AG04450 (cell line): ENCODE measurements at regions of chr7 and their contacts with region 1.

Region 1: DNA sequence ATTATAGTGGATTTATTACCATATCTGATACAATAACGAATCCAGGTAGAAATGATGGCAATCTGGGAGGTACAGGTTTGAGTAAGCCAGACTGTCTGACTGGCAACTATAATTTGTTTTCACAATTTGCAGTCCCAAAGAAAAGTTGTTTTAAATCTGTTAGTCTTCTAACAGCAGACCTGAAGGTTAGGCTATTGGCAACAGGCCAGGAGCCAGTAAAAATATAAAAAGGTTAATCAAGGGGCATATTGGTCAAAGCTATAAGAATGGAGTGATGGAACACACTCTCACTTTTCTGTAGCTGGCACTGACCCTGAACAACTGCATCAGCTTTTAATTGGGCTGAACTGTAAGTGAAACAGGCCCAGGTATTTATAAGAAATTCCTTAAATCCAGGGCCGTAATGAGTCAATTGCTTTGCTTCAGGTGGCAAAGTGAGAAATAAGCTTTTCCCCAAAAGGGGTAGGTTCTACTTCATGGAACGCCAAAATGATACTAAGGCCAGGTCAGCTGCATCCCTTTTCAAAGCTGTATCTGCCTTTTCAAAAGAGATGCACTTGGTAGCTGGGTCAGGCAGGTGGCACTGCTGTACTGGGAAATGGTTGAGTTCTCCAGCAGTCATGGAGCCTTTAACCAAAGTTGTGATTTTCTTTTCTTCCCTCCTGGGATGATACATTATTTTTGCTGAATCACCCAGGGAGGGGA is 7.0 kb upstream of the GPR22 start:
- DNase-seq: peak; percentile 50
- H3K4me3 ChIP-seq: no peak overlapping the region
- H3K27ac ChIP-seq: no peak overlapping the region
- H3K27me3 ChIP-seq: no peaks in the 10 kb centered on the region
- CTCF ChIP-seq: peak; percentile 91

Region 2: GRCh38 chr7:107479321-107479720 is 16.4 kb after region 1 on chr7:
- CTCF ChIA-PET with region 1: interaction called, 19 read pairs
- POLR2A ChIA-PET with region 1: no interaction called
- DNase-seq: no peak
- H3K4me3 ChIP-seq: no peak overlapping the region
- H3K27ac ChIP-seq: no peak overlapping the region
- H3K27me3 ChIP-seq: no peaks in the 10 kb centered on the region
- CTCF ChIP-seq: no peak

Region 3: GRCh38 chr7:107501593-107501992 is 38.7 kb after region 1 on chr7:
- CTCF ChIA-PET with region 1: interaction called, 11 read pairs
- POLR2A ChIA-PET with region 1: no interaction called
- DNase-seq: no peak
- H3K4me3 ChIP-seq: no peak overlapping the region
- H3K27ac ChIP-seq: no peak overlapping the region
- H3K27me3 ChIP-seq: no peaks in the 10 kb centered on the region
- CTCF ChIP-seq: peak; percentile 45

Region 4: DNA sequence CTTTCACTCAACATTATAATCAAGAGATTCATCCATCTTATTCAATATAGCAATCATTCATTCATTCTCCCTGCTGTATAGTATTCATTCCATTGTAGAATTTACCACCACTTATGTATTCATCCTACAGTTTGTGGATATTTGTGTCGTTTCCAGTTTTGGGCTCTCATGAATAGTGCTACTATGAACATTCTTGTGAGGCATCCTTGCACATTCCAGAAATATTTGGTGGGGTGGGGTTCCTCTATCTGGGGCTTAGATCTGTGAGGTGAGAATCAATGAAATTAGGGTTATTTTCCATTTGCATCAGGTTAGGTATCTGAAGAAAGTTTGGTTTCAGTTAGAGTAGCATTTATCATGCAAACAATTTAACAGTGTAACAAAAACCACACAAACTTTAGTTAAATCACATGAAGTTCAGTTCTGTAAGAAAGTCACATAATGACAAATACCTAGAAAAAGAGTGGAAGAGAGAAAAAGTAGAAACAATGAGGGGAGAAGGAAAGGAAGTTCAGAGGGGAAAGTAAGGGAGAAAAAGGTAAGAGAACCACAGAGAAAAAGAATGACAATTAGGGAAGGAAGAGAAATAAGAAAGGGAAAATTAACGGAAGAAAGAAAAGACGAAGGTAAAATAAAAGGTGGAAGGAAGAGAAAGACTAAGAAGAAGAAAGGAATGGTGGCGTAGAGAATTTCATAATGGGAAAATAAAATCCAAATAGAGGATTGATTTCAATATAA is 255.7 kb after region 1 on chr7:
- CTCF ChIA-PET with region 1: interaction called, 19 read pairs
- POLR2A ChIA-PET with region 1: no interaction called
- DNase-seq: no peak
- H3K4me3 ChIP-seq: no peak overlapping the region
- H3K27ac ChIP-seq: no peak overlapping the region
- H3K27me3 ChIP-seq: no peaks in the 10 kb centered on the region
- CTCF ChIP-seq: no peak

Region 5: GRCh38 chr7:107725151-107725740 is 262.4 kb after region 1 on chr7:
- CTCF ChIA-PET with region 1: interaction called, 75 read pairs
- POLR2A ChIA-PET with region 1: no interaction called
- DNase-seq: peak; percentile 42
- H3K4me3 ChIP-seq: no peak overlapping the region
- H3K27ac ChIP-seq: no peak overlapping the region
- H3K27me3 ChIP-seq: peaks cover 2% of the 10 kb centered on the region
- CTCF ChIP-seq: peak; percentile 65

Region 6: DNA sequence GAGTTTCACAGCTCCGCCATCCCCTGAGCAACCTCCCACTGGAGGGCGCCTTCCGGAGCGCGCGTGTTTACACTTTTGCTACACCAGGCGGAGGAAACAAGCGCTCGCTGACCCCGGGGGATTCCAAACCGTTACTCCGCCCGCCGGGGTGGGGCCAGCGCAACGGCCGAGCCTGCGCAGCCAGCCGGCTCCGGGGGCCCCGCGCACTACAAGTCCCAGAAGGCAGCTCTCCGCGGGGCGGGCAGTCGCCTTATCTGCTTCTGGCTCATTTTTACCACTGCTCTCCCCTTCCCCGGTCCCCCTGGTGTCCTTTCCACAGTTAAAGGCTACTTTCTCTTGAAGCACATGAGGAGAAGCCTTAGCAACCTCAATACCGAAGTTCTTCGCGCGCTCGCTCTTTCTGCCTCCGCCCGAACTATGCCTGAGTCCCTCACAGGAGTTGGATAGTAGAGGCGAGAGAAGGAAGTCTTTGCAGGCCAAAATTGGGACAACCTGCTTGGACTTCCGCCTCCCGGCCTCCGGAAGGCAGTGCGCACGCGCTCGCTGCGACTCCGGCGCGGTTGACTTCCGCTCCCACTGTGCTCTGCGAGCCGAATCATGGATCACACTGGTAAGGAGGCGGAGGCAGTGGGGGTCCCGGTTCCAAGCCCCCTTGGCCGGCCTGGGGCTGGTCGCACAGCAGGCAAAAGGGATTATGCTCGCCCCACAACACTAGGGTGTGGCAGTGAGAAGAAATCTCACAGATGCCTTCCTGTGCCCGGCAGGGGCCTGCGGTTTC is 280.9 kb after region 1 on chr7 and contains the start of gene CBLL1:
- CTCF ChIA-PET with region 1: interaction called, 48 read pairs
- POLR2A ChIA-PET with region 1: interaction called, 3 read pairs
- DNase-seq: peak; percentile 87
- H3K4me3 ChIP-seq: peak within 1 kb of the TSS; percentile 94
- H3K27ac ChIP-seq: peak within 1 kb of the TSS; percentile 99
- H3K27me3 ChIP-seq: no peaks in the 10 kb centered on the region
- CTCF ChIP-seq: peak; percentile 81
- polyA plus RNA-seq, gene CBLL1: 17.0 and 18.0 TPM in 2 replicates

Region 7: DNA sequence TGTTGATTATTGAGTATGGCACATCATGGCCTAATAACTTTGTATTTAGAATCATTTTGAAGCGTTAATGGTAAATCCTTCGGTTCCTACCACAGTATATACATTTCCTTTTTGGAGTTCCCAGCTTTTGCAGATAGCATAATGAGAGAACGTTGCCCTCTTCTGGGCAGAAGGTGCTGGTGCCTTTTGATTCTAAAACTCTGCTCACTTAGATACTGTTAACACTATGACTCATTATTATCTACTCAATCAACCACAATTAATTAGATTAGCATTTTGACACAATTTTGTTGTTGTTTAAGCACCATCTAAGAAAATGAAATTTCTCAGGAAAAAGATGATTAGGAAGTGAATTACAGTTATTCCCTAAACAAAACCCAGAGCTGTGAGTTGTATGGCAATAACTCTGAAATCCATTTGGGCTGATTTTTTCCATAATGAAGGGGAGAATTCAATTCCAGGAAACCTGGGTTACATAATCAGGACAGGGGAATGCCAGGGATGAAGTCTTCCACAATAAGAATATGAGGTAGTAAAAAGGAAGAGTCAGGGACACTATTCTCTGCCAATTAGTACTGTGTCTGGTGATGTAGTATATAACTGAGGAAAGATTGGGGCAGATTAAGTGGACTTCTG is 416.6 kb after region 1 on chr7:
- CTCF ChIA-PET with region 1: interaction called, 45 read pairs
- POLR2A ChIA-PET with region 1: no interaction called
- DNase-seq: no peak
- H3K4me3 ChIP-seq: no peak overlapping the region
- H3K27ac ChIP-seq: no peak overlapping the region
- H3K27me3 ChIP-seq: no peaks in the 10 kb centered on the region
- CTCF ChIP-seq: peak; percentile 81